ENCODE measurements at regions of chr1 and their contacts with region 1.

Region 1: DNA sequence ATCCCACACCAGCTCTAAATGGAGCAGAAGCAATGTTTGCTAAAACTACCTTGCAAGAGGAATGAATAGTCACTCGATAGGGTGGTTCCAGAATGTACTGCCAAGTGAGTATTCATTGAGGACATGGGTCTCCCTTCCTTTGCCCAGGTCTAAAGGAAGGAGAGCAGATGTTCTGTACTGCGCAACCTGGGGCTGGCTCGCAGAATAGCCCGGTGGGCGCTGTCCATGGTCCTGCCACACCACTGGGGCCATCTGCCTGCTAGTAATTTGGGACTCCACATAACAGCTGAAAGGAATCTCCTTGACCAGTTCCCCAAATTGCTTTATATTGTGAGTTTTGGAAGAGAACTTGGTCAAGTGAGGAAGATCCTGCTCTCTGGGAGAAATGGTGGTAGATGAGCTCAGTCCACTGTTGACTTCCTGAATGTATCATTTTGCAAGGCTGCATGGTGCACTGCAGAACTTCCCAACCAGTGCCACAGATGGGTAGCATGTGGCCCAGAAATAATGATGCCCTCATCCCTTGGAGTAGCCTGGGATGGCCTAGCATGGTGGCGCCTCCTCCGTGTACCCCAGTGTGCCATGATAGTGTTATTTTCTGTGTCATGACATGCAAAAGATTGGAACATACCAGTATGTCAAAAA is 5.7 kb downstream of the SLC6A17 start:
- DNase-seq: peak; percentile 62
- ATAC-seq: peak; percentile 55
- H3K4me3 ChIP-seq: no peak overlapping the region
- H3K27ac ChIP-seq: no peak overlapping the region
- H3K4me1 ChIP-seq: no peaks in the 10 kb centered on the region
- H3K27me3 ChIP-seq: peaks cover 41% of the 10 kb centered on the region
- CTCF ChIP-seq: no peak

Region 2: GRCh38 chr1:109942434-109942833 is 213.6 kb before region 1 on chr1:
- CTCF ChIA-PET with region 1: no interaction called
- POLR2A ChIA-PET with region 1: interaction called, 13 read pairs
- intact Hi-C with region 1: no loop called
- DNase-seq: no peak
- ATAC-seq: no peak
- H3K4me3 ChIP-seq: no peak overlapping the region
- H3K27ac ChIP-seq: no peak overlapping the region
- H3K4me1 ChIP-seq: no peaks in the 10 kb centered on the region
- H3K27me3 ChIP-seq: no peaks in the 10 kb centered on the region
- CTCF ChIP-seq: no peak

Region 3: DNA sequence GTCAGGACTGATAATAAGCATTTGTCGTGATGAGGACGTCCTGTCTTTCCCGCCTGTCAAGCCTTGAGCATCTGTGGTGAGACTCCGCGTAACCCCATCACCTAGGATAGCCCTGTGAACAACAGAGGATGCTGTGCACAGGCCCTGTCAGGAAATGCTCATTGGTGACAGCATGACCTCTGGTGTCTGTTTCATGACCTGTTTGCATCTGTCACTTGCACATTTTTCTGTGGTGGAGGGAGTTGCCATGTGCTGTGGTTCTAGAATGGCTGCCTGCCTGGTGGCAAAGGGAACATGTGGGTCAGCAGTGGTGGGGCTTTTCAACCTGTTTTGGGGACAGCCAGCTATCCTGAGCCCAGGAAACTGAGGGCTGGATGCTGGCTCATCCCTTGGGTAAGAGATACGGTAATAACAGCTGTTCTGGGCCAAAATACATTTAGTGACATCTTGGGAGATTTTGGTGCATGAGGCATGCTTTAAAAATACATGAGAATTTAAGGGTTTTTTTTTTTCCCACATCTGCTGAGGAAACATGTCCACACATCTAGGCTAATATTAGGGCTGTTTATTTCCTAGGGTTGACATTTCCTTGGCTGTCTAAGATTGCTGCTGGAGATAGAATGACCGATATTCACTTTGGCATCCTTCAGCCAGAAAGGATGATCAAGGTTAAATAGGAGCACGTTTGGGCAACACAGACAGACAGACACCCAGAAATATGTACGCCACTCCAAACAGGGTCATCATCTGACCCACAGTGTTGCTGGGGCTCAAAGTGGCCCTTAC is 107.0 kb after region 1 on chr1:
- CTCF ChIA-PET with region 1: no interaction called
- POLR2A ChIA-PET with region 1: no interaction called
- intact Hi-C with region 1: no loop called
- DNase-seq: no peak
- ATAC-seq: no peak
- H3K4me3 ChIP-seq: no peak overlapping the region
- H3K27ac ChIP-seq: no peak overlapping the region
- H3K4me1 ChIP-seq: no peaks in the 10 kb centered on the region
- H3K27me3 ChIP-seq: peaks cover 60% of the 10 kb centered on the region
- CTCF ChIP-seq: no peak

Region 4: DNA sequence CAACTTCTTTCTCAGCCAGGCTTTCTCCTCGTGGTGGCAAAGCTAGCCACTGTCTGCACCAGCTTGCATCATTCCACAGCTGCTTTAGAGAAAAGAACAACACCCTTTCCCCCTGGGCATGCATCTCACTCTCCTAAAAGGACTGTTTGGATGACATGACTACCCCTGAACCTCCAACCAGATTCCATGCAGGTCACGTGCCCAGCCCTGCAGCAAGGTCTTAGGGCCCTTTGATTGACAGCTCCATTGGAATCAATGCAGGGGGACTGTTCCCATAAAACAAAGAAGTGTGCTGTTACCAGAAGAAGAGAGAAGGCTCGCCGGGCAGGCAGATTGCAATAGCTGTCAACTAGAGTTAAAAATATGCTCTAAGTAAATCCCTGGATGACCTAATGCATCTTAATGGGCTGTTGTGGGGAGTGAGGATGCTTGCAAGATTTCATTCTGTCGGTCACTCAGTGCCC is 425.7 kb after region 1 on chr1:
- CTCF ChIA-PET with region 1: no interaction called
- POLR2A ChIA-PET with region 1: no interaction called
- intact Hi-C with region 1: no loop called
- DNase-seq: no peak
- ATAC-seq: no peak
- H3K4me3 ChIP-seq: no peak overlapping the region
- H3K27ac ChIP-seq: no peak overlapping the region
- H3K4me1 ChIP-seq: no peaks in the 10 kb centered on the region
- H3K27me3 ChIP-seq: peaks cover 53% of the 10 kb centered on the region
- CTCF ChIP-seq: no peak